ENCODE measurements at regions of chr1 and their contacts with region 1.

Region 1: GRCh38 chr1:35298464-35298863 is 30.0 kb downstream of the ZMYM4 start:
- DNase-seq: peak in 2 of 4 donors; percentile 17 to 47
- ATAC-seq: peak; percentile 88
- H3K4me3 ChIP-seq: no peak overlapping the region
- H3K27ac ChIP-seq: no peak overlapping the region
- H3K4me1 ChIP-seq: peaks cover 0 to 6% of the 10 kb centered on the region in 2 donors
- H3K27me3 ChIP-seq: no peaks in the 10 kb centered on the region
- CTCF ChIP-seq: peak in 1 of 2 donors; percentile 28

Region 2: DNA sequence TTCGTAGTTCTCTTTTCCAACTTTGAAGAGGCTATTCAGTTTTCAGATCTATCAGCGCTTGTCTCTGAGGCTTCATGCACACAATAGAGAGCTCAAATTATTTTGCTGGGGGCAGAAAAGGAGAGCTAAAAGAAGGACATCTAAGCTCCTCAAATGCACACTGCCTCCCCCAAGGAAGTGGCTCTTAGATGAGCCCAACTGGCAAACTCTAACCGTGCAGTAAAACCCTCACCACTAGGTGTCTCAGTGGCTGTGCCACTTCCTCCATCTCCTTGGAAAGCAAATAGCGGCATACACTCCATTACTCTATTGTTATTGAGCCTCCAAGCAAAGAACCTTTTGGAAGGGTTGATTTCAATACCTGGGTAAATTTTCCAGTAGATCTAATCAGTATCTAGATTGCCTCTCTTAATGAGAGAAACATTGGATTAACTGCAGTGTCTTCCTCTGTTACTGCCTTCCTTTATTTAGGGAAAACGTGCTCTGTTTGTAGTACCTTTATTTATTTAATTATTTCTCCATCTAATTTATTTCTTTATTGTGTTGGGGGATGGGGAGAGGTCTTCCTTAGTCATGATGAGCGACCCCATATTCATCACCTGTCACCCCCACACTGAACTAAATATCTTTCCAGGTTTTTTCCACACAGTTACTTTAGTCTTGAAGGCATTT is 96.3 kb before region 1 on chr1:
- intact Hi-C with region 1: loop called in 1 of 2 experiments (anchors 10 kb)
- DNase-seq: peak in 3 of 4 donors; percentile 58 to 86 (median 69)
- ATAC-seq: peak; percentile 100
- H3K4me3 ChIP-seq: no peak overlapping the region
- H3K27ac ChIP-seq: no peak overlapping the region
- H3K4me1 ChIP-seq: peaks cover 0 to 7% of the 10 kb centered on the region in 2 donors
- H3K27me3 ChIP-seq: no peaks in the 10 kb centered on the region
- CTCF ChIP-seq: peak; percentile 83 to 84

Region 3: DNA sequence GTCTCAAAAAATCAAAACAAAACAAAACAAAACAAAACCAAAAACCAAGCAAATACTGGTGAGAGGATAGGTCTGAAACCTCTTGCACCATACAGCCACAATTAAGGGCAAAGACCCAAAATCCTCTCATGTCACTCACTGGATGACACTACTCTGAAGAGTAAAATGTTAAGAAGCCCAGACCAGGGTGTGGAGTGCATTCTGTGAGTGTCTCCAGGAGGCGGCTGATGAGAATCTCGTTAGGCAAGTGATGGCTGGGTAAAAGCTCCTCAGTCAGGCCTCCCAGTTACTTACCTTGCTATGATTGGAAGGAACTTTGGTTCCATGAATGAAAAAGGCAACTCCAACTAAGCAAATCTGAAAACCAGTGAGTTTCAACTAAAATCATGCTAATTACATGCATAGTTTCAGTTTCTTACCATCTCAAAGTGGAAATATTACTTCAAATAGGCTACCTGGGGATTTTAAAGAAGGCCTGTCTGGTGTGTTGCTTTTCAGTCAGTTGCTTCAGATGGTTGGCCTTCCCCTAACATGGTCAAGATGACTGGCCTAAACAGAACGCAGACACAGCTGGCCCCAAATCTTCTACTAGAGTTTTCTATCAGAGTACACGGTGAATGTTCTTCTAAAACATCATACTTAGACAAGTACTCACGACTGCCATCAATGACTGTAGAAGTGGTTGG is 163.6 kb after region 1 on chr1:
- intact Hi-C with region 1: no loop called
- DNase-seq: no peak
- ATAC-seq: no peak
- H3K4me3 ChIP-seq: no peak overlapping the region
- H3K27ac ChIP-seq: no peak overlapping the region
- H3K4me1 ChIP-seq: no peaks in the 10 kb centered on the region
- H3K27me3 ChIP-seq: no peaks in the 10 kb centered on the region
- CTCF ChIP-seq: no peak

Measured in left lung (tissue), 14 donors.